Dendritic cell treated with granulocyte-macrophage colony-stimulating factor and Interleukin-4, amounts not matched to agents 40 ng/mL and 50 ng/mL, for 4 days (primary cell): ENCODE measurements at regions of chr19 and their contacts with region 1.

Region 1: DNA sequence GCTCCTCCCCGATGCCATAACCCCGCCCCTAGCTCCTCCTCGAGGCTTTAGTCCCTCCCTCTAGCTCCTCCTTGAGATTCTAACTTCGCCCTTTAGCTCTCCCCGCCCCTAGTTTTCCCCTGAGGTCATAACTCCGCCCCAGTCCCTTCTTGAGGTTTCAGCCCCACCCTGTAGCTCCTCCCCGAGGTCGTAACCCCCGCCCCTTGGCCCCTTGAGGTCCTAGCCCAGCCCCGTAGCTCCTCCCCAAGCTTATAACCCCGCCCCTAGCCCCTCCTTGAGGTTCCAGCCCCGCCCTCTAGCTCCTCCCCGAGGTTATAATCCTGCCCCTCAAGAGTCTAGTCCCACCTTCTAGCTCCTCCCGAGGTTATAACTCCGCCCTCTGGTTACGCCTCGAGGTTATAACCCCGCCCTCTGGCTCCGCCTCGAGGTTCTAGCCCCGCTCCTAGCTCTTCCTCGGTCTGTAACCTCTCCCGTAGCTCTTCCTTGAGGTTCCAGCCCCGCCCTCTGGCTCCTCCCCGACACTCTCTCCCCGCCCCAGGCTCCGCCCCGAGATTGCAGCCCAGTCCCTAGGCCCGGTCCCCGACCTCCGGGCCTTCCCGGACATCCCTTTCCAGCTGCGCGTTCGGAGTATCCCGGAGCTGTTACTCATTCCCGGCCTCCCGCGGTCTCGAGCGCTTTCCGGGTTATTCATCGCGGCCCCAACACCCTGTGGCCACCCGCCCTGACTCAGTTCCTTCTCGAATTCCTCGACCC is 1.4 kb downstream of the PLAUR start:
- H3K4me3 Mint-ChIP-seq: peak overlapping the region; percentile 100
- H3K27ac Mint-ChIP-seq: peak overlapping the region; percentile 97
- H3K4me1 Mint-ChIP-seq: peaks cover 67% of the 10 kb centered on the region
- H3K27me3 Mint-ChIP-seq: no peaks in the 10 kb centered on the region

Region 2: DNA sequence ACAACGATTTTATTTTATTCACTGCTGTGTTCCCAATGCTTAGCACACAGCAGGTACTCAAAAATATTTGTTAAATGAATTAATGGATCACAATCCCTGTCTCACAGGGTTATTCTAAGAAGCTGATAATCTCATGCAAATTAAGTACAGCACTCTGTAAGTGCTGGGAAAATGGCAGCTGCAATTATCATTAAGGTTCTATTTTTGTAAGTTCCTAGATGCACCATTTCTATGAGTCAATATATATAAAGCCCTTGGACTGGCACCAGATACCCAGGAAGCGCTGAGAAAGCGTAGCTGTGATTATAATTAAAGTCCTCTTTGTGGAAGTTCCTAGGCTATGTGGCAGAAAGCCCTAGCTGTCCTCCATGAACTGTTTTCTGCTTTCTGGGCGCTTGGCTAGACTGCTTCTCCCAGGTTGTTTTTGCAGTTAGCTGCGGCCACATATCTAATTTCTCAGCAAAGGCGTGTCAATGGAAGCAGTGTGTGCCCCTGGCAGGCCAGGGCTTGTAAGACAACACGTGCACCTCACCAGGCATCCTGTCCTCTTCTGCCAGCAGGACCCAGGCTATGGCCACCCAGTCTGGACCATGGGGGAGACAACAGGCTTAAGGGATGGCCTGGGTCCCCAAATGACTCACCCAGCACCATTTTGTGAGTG is 61.9 kb before region 1 on chr19:
- intact Hi-C with region 1: no loop called
- H3K4me3 Mint-ChIP-seq: no peak overlapping the region
- H3K27ac Mint-ChIP-seq: no peak overlapping the region
- H3K4me1 Mint-ChIP-seq: peaks cover 6% of the 10 kb centered on the region
- H3K27me3 Mint-ChIP-seq: no peaks in the 10 kb centered on the region

Region 3: DNA sequence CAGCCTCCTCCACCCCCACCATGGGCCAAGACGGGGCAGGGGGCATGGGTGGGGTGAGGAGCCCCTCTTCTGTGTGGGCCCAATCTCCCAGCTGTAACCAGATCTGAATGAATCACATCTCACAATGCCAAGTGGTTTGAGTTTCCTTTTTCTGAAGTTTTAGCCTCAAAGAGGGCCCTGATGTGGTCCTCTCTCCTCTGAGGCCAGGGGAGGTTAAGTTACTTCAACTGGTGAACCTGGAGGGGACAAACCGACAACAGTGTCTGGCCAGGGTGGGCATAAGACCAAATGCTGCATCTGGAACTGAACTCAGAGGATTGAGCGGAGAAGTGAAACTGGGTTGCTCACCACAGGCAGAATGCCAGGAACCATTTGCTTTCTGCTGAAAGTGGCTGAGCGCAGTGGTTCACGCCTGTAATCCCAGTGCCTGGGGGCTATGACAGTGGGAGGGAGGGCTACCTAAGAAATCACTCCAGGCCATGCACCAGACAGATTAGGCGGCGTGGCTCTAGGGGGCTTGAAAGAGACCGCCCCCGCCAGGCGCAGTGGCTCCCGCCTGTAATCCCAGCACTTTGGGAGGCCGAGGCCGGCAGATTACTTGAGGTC is 31.9 kb after region 1 on chr19:
- intact Hi-C with region 1: loop called (anchors 1 kb)
- H3K4me3 Mint-ChIP-seq: peak overlapping the region; percentile 72
- H3K27ac Mint-ChIP-seq: peak overlapping the region; percentile 95
- H3K4me1 Mint-ChIP-seq: peaks cover 73% of the 10 kb centered on the region
- H3K27me3 Mint-ChIP-seq: peaks cover 5% of the 10 kb centered on the region

Region 4: DNA sequence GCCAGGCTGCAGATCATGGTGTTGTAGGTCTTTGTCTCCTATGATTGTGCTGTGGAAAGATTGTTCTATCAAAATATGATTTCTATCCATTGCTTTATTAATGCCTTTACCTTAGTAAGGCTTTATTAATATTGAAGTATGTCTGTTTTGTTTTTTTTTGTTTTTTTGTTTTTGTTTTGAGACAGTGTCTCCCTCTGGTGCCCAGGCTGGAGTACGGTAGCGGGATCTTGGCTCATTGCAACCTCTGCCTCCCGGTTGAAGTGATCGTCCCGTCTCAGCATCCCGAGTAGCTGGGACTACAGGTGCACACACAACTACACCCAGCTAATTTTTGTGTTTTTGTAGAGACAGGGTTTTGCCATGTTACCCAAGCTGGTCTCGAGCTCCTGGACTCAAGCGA is 55.0 kb after region 1 on chr19:
- intact Hi-C with region 1: loop called (anchors 1 kb)
- H3K4me3 Mint-ChIP-seq: no peak overlapping the region
- H3K27ac Mint-ChIP-seq: no peak overlapping the region
- H3K4me1 Mint-ChIP-seq: peaks cover 50% of the 10 kb centered on the region
- H3K27me3 Mint-ChIP-seq: peaks cover 19% of the 10 kb centered on the region

Region 5: DNA sequence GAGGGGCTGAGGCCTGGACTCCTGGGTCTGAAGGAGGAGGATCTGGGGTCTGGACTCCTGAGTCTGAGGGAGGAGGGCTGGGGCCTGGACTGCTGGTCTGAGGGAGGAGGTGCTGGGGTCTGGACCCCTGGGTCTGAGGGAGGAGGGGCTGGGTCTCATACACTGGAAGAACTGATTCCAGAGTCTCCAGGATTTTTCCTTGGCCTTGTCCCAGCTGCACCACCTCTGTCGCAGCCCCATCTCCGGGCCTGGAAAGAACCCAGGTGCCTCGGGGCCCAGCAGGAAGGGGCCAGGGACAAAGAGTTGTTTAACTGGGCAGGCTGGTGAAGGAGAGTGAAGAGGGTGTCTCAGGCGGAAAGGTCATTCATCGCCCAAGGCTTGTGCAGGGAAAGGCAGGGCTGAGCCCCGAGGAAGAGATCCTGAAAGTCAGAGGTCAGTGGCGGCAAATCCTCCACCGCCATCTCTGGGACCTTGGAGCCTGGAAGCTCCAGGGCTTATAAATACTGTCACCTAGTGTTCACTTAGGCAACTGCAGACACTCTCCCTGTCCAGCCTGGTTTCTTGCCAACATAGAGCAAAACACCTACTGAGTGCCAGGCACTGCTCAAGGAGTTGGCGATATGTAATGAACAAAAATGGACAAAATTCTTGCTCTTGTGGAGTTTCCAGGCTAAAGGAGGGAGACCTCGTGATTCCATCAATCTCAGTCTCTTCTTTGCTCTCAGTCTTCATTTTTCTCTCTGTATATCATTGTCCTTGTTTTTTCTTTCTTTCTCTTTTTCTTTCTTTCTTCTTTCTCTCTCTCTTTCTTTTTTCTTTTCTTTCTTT is 116.6 kb after region 1 on chr19:
- intact Hi-C with region 1: loop called (anchors 10 kb)
- H3K4me3 Mint-ChIP-seq: no peak overlapping the region
- H3K27ac Mint-ChIP-seq: peak overlapping the region; percentile 0
- H3K4me1 Mint-ChIP-seq: peaks cover 47% of the 10 kb centered on the region
- H3K27me3 Mint-ChIP-seq: no peaks in the 10 kb centered on the region